Activated CD8-positive, alpha-beta T cell treated with anti-CD3 and anti-CD28 coated beads for 36 hours (primary cell): ENCODE measurements at regions of chr6 and their contacts with region 1.

Region 1: DNA sequence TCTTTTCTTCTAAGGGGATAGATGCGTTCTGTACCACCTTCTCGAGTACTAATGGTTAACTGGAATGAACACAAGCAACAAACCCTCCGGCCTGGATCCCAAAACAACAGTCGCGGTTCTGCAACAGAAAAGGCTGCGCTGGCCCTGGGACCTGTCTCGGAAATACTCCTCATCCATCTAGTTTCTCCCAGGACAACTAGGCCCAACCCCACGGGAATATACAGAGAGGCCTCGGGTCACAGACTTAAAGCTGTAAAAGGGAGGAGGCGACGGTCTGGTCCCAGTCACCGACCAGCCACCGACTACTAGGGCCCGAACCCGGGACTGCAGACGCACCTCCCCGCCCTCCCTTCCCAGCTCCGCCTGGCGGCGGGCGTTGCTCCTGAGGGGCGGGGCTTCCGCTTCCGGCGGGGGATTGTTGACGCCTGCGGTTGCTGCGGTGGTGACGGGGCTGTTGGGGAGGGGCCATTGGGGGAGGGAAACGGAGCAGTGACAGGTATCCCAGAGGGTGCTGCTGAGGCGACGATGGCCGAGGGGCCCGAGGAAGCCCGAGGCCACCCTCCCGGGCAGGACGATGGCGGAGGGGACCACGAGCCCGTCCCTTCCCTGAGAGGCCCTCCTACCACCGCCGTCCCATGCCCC is at the start of gene FAM8A1:
- DNase-seq: peak; percentile 96
- ATAC-seq: peak; percentile 90
- H3K4me3 Mint-ChIP-seq: peak within 1 kb of the TSS; percentile 77
- H3K27ac Mint-ChIP-seq: peak within 1 kb of the TSS; percentile 82
- H3K4me1 Mint-ChIP-seq: peaks cover 26% of the 10 kb centered on the region
- H3K27me3 Mint-ChIP-seq: no peaks in the 10 kb centered on the region
- CTCF ChIP-seq: peak; percentile 51
- total RNA-seq, gene FAM8A1: 3.2 to 3.8 TPM

Region 2: GRCh38 chr6:17610835-17611234 is 10.8 kb after region 1 on chr6:
- CTCF ChIA-PET with region 1: interaction called, 4 read pairs
- POLR2A ChIA-PET with region 1: interaction called, 11 read pairs
- intact Hi-C with region 1: no loop called
- DNase-seq: no peak
- ATAC-seq: no peak
- H3K4me3 Mint-ChIP-seq: no peak overlapping the region
- H3K27ac Mint-ChIP-seq: no peak overlapping the region
- H3K4me1 Mint-ChIP-seq: peaks cover 6% of the 10 kb centered on the region
- H3K27me3 Mint-ChIP-seq: no peaks in the 10 kb centered on the region
- CTCF ChIP-seq: no peak

Region 3: GRCh38 chr6:17700421-17701416 is 100.7 kb after region 1 on chr6:
- CTCF ChIA-PET with region 1: interaction called, 21 read pairs
- POLR2A ChIA-PET with region 1: interaction called, 15 read pairs
- intact Hi-C with region 1: no loop called
- DNase-seq: no peak
- ATAC-seq: no peak
- H3K4me3 Mint-ChIP-seq: peak overlapping the region; percentile 12
- H3K27ac Mint-ChIP-seq: peak overlapping the region; percentile 68
- H3K4me1 Mint-ChIP-seq: peaks cover 41% of the 10 kb centered on the region
- H3K27me3 Mint-ChIP-seq: no peaks in the 10 kb centered on the region
- CTCF ChIP-seq: no peak

Region 4: DNA sequence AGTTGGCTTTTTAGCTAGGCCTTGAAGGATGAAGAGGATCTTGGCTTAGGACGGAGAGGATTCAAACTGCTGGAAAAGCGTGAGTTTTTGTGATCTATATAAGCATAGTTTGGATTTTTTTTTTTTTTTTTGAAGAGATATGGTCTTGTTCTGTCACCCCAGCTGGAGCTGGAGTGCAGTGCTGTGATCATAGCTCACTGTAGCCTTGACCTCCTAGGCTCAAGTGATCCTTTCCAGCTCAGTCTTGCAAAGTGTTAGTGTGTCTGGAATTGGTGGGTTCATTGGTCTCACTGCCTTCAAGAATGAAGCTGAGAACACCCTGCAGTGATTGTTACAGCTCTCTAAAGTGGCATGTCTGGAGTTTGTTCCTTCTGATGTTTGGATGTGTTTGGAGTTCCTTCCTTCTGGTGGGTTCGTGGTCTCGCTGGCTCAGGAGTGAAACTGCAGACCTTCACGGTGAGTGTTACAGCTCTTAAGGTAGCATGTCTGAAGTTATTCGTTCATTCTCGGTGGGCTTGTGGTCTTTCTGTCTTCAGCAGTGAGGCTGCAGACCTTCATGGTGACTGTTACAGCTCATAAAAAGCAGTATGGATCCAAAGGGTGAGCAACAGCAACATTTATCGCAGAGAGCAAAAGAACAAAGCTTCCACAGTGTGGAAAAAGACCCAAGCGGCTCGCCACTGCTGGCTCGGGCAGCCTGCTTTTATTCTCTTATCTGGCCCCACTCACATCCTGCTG is 144.2 kb after region 1 on chr6:
- CTCF ChIA-PET with region 1: no interaction called
- POLR2A ChIA-PET with region 1: no interaction called
- intact Hi-C with region 1: no loop called
- DNase-seq: no peak
- ATAC-seq: no peak
- H3K4me3 Mint-ChIP-seq: no peak overlapping the region
- H3K27ac Mint-ChIP-seq: no peak overlapping the region
- H3K4me1 Mint-ChIP-seq: no peaks in the 10 kb centered on the region
- H3K27me3 Mint-ChIP-seq: no peaks in the 10 kb centered on the region
- CTCF ChIP-seq: no peak